K562 (cell line): ENCODE measurements at regions of chr6 and their contacts with region 1.

Region 1: GRCh38 chr6:53322188-53323029 is 26.3 kb downstream of the ELOVL5 start:
- DNase-seq: no peak
- ATAC-seq: no peak
- H3K4me3 ChIP-seq: no peak overlapping the region
- H3K27ac ChIP-seq: peak overlapping the region; percentile 25; the same call in 1 of the 3 replicates
- H3K4me1 ChIP-seq: peaks cover 14 to 40% of the 10 kb centered on the region in 2 experiments
- H3K27me3 ChIP-seq: no peaks in the 10 kb centered on the region
- CTCF ChIP-seq: no peak
- EP300 ChIP-seq: no peak
- POLR2A ChIP-seq: no peak
- RAD21 ChIP-seq: no peak

Region 2: GRCh38 chr6:53168511-53169267 is 153.7 kb before region 1 on chr6:
- CTCF ChIA-PET with region 1: no interaction called
- POLR2A ChIA-PET with region 1: no interaction called
- in situ Hi-C with region 1: no loop called
- intact Hi-C with region 1: no loop called
- DNase-seq: no peak
- ATAC-seq: no peak
- H3K4me3 ChIP-seq: no peak overlapping the region
- H3K27ac ChIP-seq: no peak overlapping the region
- H3K4me1 ChIP-seq: no peaks in the 10 kb centered on the region
- H3K27me3 ChIP-seq: peaks cover 4 to 11% of the 10 kb centered on the region in 2 experiments; a peak in 4 of 5 replicates
- CTCF ChIP-seq: no peak
- EP300 ChIP-seq: no peak
- POLR2A ChIP-seq: no peak
- RAD21 ChIP-seq: no peak

Region 3: DNA sequence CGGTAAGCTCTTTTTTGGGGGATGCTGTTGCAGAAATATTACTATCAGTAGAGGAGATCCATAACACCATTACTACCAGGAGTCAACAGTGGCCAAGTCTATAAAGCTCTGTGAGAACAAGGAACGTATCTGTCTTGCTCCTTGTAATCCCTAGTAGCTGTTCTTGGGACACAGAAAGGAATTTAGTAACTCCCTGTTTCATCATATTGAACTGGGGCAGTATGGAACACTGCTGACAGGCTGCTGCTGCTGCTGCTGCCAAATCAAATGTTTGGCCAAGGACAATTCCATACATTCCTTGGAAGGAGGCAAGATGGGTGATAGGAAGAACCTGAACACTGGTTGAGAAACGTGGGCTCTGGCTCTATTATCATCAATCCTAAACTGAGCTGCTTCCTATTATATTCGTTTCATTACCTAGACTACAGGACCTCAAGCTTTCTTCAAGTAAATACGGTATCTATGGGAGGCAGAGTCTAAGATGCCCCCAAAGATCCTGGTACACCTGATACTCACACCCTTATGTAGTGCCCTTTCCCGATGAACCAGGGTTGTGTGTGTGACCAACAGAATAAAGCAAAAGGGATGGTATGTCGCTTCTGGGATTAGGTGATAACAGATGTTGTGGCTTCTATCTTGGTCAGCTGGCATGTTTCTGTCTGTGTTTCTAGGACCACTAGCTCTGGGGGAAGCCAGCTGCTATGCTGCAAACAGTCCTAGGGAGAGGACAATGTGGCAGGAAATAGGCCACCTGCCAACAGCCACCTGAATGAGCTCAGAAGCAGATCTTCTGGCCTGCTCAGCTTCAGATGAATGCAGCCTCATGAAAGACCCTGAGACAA is 13.1 kb before region 1 on chr6:
- CTCF ChIA-PET with region 1: no interaction called
- POLR2A ChIA-PET with region 1: interaction called, 17 read pairs
- in situ Hi-C with region 1: no loop called
- intact Hi-C with region 1: no loop called
- DNase-seq: peak; percentile 37 to 69 (median 46)
- ATAC-seq: peak; percentile 38
- H3K4me3 ChIP-seq: no peak overlapping the region
- H3K27ac ChIP-seq: peak overlapping the region; percentile 86
- H3K4me1 ChIP-seq: peaks cover 17 to 68% of the 10 kb centered on the region in 2 experiments
- H3K27me3 ChIP-seq: no peaks in the 10 kb centered on the region
- CTCF ChIP-seq: no peak
- EP300 ChIP-seq: no peak
- POLR2A ChIP-seq: no peak
- RAD21 ChIP-seq: no peak